Panc1 (cell line): ENCODE measurements at regions of chr2 and their contacts with region 1.

Region 1: GRCh38 chr2:189661148-189661956 is at the start of gene ASNSD1:
- DNase-seq: peak; percentile 98
- ATAC-seq: peak; percentile 98
- H3K4me3 ChIP-seq: peak within 1 kb of the TSS; percentile 94 to 98
- H3K27ac ChIP-seq: peak within 1 kb of the TSS; percentile 93
- H3K4me1 ChIP-seq: peaks cover 5% of the 10 kb centered on the region
- H3K27me3 ChIP-seq: no peaks in the 10 kb centered on the region
- CTCF ChIP-seq: peak; percentile 97
- total RNA-seq, gene ASNSD1: 30.3 TPM

Region 2: GRCh38 chr2:188845692-188846091 is 815.7 kb before region 1 on chr2:
- CTCF ChIA-PET with region 1: no interaction called
- POLR2A ChIA-PET with region 1: interaction called, 11 read pairs
- in situ Hi-C with region 1: no loop called
- intact Hi-C with region 1: no loop called
- DNase-seq: no peak
- ATAC-seq: no peak
- H3K4me3 ChIP-seq: no peak overlapping the region
- H3K27ac ChIP-seq: no peak overlapping the region
- H3K4me1 ChIP-seq: no peaks in the 10 kb centered on the region
- H3K27me3 ChIP-seq: no peaks in the 10 kb centered on the region
- CTCF ChIP-seq: no peak

Region 3: DNA sequence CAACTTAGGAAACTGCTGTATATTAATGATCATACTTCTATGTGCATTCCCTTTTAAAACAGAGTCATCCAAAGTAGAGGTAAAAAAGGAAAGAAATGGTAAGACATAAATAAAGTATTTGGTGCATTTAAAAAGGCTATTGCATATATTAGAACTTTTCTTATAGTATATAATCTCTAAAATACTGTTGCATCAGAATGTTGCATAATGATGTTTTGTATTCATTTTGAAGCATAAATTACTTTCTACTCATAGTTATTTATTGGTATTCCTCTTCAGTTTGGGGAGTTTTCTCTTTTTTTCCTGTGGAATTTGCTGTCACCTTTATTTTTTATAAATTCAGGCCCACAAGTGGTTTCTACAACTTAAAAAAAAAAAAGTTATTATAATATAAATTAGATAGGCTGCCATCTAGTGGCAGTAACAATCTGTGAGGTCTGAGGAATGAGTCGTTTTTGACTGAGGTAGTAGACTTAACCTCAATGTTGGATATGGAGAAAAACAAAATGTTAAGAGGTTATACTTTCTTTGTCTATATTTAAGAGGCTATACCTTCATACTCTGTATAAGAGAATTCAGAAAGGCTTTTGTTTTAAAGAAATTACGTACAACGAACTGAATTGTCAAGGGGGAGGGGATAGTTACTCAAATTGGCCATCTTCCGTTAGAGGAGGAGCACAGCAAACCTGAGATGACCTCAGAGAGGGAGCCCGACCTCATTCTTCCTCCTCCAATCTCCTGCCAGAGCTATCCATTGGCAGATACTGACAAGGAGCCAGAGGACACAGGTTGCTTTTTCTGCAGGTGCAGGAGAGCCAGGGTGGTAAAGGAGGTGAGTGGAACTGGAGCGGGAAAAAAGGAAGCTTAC is 36.9 kb after region 1 on chr2:
- CTCF ChIA-PET with region 1: no interaction called
- POLR2A ChIA-PET with region 1: no interaction called
- in situ Hi-C with region 1: no loop called
- intact Hi-C with region 1: loop called (anchors 5 kb)
- DNase-seq: no peak
- ATAC-seq: peak; percentile 76; the same call in 1 of the 2 replicates
- H3K4me3 ChIP-seq: no peak overlapping the region
- H3K27ac ChIP-seq: no peak overlapping the region; the same call in 1 of the 2 replicates
- H3K4me1 ChIP-seq: peaks cover 2% of the 10 kb centered on the region; the same call in 1 of the 2 replicates
- H3K27me3 ChIP-seq: no peaks in the 10 kb centered on the region
- CTCF ChIP-seq: peak; percentile 70

Region 4: GRCh38 chr2:189762551-189763298 is 101.4 kb after region 1 on chr2 and contains the start of gene OSGEPL1:
- CTCF ChIA-PET with region 1: interaction called, 6 read pairs
- POLR2A ChIA-PET with region 1: no interaction called
- in situ Hi-C with region 1: no loop called
- intact Hi-C with region 1: loop called (anchors 5 kb)
- DNase-seq: peak; percentile 88
- ATAC-seq: peak; percentile 99
- H3K4me3 ChIP-seq: peak within 1 kb of the TSS; percentile 82 to 90
- H3K27ac ChIP-seq: peak within 1 kb of the TSS; percentile 99
- H3K4me1 ChIP-seq: peaks cover 11% of the 10 kb centered on the region; the same call in 1 of the 2 replicates
- H3K27me3 ChIP-seq: no peaks in the 10 kb centered on the region
- CTCF ChIP-seq: peak; percentile 73
- total RNA-seq, gene OSGEPL1: 6.3 TPM

Region 5: DNA sequence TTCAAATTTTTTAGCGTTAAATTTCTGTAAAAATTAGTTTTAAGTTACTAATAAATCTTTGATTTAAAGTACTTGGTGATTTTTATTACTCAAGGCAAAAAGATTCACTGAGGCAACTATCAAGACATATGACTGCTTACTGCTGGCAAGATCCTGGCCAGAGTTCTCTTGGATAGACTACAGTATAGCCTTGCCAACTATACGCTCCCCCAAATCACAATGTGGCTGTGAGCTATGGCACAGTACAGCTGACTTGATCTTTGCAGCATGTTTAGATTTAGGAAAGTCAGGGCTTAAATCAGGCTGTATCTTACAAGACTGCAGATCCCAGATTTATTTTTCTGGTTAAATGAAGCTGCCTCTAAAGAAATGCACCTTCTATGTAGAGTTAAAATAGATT is 374.7 kb after region 1 on chr2:
- CTCF ChIA-PET with region 1: interaction called, 10 read pairs
- POLR2A ChIA-PET with region 1: no interaction called
- in situ Hi-C with region 1: no loop called
- intact Hi-C with region 1: no loop called
- DNase-seq: no peak
- ATAC-seq: no peak
- H3K4me3 ChIP-seq: no peak overlapping the region
- H3K27ac ChIP-seq: no peak overlapping the region
- H3K4me1 ChIP-seq: no peaks in the 10 kb centered on the region
- H3K27me3 ChIP-seq: peaks cover 3% of the 10 kb centered on the region; the same call in 1 of the 2 replicates
- CTCF ChIP-seq: no peak

Region 6: GRCh38 chr2:190069936-190070696 is 408.8 kb after region 1 on chr2:
- CTCF ChIA-PET with region 1: no interaction called
- POLR2A ChIA-PET with region 1: no interaction called
- in situ Hi-C with region 1: no loop called
- intact Hi-C with region 1: loop called (anchors 5 kb)
- DNase-seq: peak; percentile 47
- ATAC-seq: no peak
- H3K4me3 ChIP-seq: no peak overlapping the region
- H3K27ac ChIP-seq: no peak overlapping the region
- H3K4me1 ChIP-seq: no peaks in the 10 kb centered on the region
- H3K27me3 ChIP-seq: no peaks in the 10 kb centered on the region
- CTCF ChIP-seq: peak; percentile 69; the same call in 1 of the 2 replicates